IMR-90 (cell line): ENCODE measurements at regions of chrX and their contacts with region 1.

Region 1: GRCh38 chrX:132059973-132060540 is 37.0 kb downstream of the STK26 start:
- DNase-seq: no peak
- ATAC-seq: no peak
- H3K4me3 ChIP-seq: no peak overlapping the region
- H3K27ac ChIP-seq: no peak overlapping the region
- H3K4me1 ChIP-seq: no peaks in the 10 kb centered on the region
- H3K27me3 ChIP-seq: peaks cover 8% of the 10 kb centered on the region
- CTCF ChIP-seq: no peak
- POLR2A ChIP-seq: no peak
- RAD21 ChIP-seq: no peak

Region 2: DNA sequence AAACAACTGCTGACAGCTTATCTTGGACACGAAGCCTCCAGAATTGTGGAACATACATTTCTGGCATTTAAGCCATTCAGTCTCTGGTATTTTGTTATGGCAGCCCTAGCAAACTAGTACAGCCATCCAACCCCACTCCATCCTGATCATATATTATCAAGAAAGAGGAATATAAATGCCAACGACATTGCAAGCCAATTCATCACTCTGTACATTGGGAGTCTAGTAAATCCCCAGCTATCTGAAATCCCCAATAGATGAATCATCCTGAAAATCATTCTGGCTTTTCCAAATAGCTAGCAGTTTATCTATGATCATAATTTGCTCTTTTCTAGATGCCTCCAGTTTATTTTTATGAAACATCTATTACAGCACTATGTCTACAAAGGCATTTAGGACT is 26.6 kb after region 1 on chrX:
- CTCF ChIA-PET with region 1: interaction called, 11 read pairs
- POLR2A ChIA-PET with region 1: no interaction called
- dilution Hi-C with region 1: no loop called
- in situ Hi-C with region 1: no loop called
- intact Hi-C with region 1: no loop called
- DNase-seq: no peak
- ATAC-seq: no peak
- H3K4me3 ChIP-seq: no peak overlapping the region
- H3K27ac ChIP-seq: no peak overlapping the region
- H3K4me1 ChIP-seq: no peaks in the 10 kb centered on the region
- H3K27me3 ChIP-seq: peaks cover 14% of the 10 kb centered on the region; the same call in 1 of the 2 replicates
- CTCF ChIP-seq: no peak
- POLR2A ChIP-seq: no peak
- RAD21 ChIP-seq: no peak